Activated CD4-positive, alpha-beta T cell treated with anti-CD3 and anti-CD28 coated beads for 36 hours (primary cell): ENCODE measurements at regions of chr1 and their contacts with region 1.

Region 1: GRCh38 chr1:200669314-200670241 is at the start of gene DDX59:
- DNase-seq: peak; percentile 96
- ATAC-seq: peak; percentile 87
- H3K4me3 Mint-ChIP-seq: peak within 1 kb of the TSS; percentile 94
- H3K27ac Mint-ChIP-seq: peak within 1 kb of the TSS; percentile 99
- H3K4me1 Mint-ChIP-seq: peaks cover 40% of the 10 kb centered on the region
- H3K27me3 Mint-ChIP-seq: no peaks in the 10 kb centered on the region
- total RNA-seq, gene DDX59: 17.4 to 19.4 TPM

Region 2: DNA sequence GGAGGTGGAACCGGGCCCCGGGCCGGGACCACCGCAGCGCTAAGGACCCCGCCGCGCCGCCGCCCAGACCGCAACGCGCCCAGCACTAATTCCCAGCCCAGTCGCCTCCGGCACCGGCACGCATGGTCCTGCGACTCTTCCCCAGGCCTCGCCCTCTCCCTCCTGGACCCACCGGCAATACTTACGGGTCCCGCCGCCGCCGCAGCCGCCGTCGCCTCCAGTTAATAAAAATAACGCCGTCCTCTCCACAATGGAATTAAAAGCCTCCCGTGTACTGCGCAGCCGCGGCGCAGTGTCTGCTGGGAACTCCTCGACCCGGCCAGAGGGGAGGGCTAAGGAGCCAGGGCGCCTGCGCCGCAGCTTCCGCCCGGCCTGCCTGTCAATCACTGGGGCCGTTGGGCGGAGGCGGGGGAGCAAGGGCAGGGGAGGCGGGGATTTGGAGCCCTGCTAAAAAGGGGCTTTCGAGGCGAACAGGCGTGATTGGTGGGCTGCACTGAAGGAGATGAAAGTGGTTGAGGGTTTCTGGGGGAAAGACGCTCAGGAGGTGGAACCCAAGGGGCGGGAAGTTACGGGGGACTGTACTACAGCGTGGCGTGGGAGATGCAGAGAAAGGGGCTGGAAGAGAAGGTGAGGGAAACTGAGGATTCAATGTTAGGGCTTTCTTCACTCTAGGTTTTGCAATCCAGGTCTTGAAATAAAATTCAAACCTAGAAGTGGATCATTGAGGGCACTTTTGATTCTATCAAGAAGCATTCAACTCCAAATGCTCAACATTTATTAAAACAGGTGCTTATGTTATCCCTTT is 259.6 kb before region 1 on chr1 and contains the start of gene ZNF281:
- CTCF ChIA-PET with region 1: no interaction called
- POLR2A ChIA-PET with region 1: no interaction called
- intact Hi-C with region 1: loop called in 1 of 2 experiments (anchors 1 kb)
- DNase-seq: peak; percentile 97
- ATAC-seq: peak; percentile 99
- H3K4me3 Mint-ChIP-seq: peak within 1 kb of the TSS; percentile 80
- H3K27ac Mint-ChIP-seq: peak within 1 kb of the TSS; percentile 93
- H3K4me1 Mint-ChIP-seq: peaks cover 49% of the 10 kb centered on the region
- H3K27me3 Mint-ChIP-seq: no peaks in the 10 kb centered on the region
- total RNA-seq, gene ZNF281: 10.8 to 13.5 TPM

Region 3: GRCh38 chr1:200639790-200640669 is 29.5 kb before region 1 on chr1:
- CTCF ChIA-PET with region 1: interaction called, 3 read pairs
- POLR2A ChIA-PET with region 1: no interaction called
- intact Hi-C with region 1: loop called in 1 of 2 experiments (anchors 1 kb)
- DNase-seq: peak; percentile 57
- ATAC-seq: peak; percentile 94
- H3K4me3 Mint-ChIP-seq: no peak overlapping the region
- H3K27ac Mint-ChIP-seq: peak overlapping the region; percentile 20
- H3K4me1 Mint-ChIP-seq: peaks cover 7% of the 10 kb centered on the region
- H3K27me3 Mint-ChIP-seq: no peaks in the 10 kb centered on the region

Region 4: DNA sequence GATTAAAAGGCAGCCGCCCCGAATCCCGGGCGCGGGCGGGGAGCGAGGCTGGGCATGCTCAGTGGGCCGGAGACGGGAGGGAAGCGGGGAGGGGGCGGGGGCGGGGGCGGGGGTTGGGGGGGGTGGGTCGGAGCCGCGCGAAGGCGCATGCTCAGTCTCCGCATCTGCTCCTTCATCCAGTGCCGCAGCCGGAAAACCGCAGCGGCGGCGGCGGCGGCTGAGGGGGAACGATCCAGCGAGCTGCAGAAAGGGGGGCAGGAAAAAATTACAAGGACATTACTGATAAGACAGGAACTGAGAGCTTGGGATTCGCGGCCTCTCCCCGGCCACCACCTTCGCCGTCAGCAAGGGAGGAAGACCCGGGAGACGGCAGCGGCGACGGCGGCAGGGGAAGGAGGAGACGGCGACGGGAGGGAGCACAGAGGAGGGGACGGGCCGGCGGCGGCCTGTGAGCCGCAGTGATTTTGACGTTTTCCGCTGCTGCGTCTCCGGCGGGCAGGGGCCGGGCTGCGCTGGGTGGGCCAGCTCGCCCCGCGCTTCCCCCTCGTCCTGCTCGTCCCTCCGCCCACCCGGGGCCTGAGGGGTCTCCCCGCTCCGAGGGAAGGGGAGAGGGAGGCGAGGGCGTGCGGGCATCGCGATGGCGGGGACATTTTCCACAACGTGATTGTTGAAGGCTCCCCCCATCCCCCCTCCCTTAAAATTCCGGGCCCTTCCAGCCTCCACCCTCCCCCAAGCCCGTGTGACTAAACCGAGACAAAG is 69.3 kb after region 1 on chr1 and contains the start of gene CAMSAP2:
- CTCF ChIA-PET with region 1: no interaction called
- POLR2A ChIA-PET with region 1: interaction called, 4 read pairs
- intact Hi-C with region 1: loop called (anchors 1 to 5 kb)
- DNase-seq: peak; percentile 74
- ATAC-seq: peak; percentile 51
- H3K4me3 Mint-ChIP-seq: peak within 1 kb of the TSS; percentile 91
- H3K27ac Mint-ChIP-seq: peak within 1 kb of the TSS; percentile 90
- H3K4me1 Mint-ChIP-seq: peaks cover 44% of the 10 kb centered on the region
- H3K27me3 Mint-ChIP-seq: peaks cover 4% of the 10 kb centered on the region
- total RNA-seq, gene CAMSAP2: 2.3 to 3.0 TPM

Region 5: GRCh38 chr1:200802865-200803512 is 133.4 kb after region 1 on chr1:
- CTCF ChIA-PET with region 1: interaction called, 5 read pairs
- POLR2A ChIA-PET with region 1: interaction called, 3 read pairs
- intact Hi-C with region 1: loop called in 1 of 2 experiments (anchors 1 kb)
- DNase-seq: peak; percentile 86
- ATAC-seq: peak; percentile 88
- H3K4me3 Mint-ChIP-seq: no peak overlapping the region
- H3K27ac Mint-ChIP-seq: no peak overlapping the region
- H3K4me1 Mint-ChIP-seq: peaks cover 2% of the 10 kb centered on the region
- H3K27me3 Mint-ChIP-seq: no peaks in the 10 kb centered on the region